ENCODE measurements at regions of chr11 and their contacts with region 1.

Region 1: DNA sequence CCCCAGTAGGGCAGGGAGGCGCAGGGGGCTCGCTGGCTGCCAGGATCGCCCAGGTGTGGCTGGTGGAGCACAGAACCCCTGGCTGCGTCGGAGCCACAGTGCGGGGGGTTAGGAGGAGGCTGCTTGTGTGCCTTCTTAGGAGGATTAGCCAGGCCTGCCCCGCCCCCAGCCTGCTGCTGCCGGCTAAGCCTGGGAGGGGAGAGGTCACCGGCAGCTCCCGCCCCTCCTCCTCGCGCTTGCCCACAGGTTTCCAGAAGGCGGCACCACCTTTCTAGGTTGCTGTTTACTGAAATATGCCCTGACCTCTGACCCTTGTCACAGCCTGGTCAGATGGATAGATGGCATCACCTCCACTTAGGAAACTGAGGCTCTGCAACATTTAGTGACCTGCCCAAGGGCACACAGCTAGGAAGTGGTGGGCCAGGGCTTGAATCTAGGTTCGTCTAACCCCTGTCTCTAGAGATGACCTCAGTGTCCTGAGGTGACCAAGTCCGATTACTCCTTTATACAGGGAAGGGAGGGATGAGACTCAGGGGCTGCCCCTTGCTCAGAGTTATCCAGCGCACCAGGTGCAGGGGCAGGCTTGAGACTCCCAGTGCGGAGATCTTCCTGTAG is 43.9 kb downstream of the MYO7A start:
- H3K4me3 Mint-ChIP-seq: no peak overlapping the region
- H3K27ac Mint-ChIP-seq: no peak overlapping the region
- H3K4me1 Mint-ChIP-seq: peaks cover 40% of the 10 kb centered on the region
- H3K27me3 Mint-ChIP-seq: peaks cover 10% of the 10 kb centered on the region

Region 2: GRCh38 chr11:76734456-76735420 is 437.3 kb before region 1 on chr11:
- intact Hi-C with region 1: no loop called
- H3K4me3 Mint-ChIP-seq: no peak overlapping the region
- H3K27ac Mint-ChIP-seq: no peak overlapping the region
- H3K4me1 Mint-ChIP-seq: peaks cover 25% of the 10 kb centered on the region
- H3K27me3 Mint-ChIP-seq: peaks cover 29% of the 10 kb centered on the region

Region 3: GRCh38 chr11:76978818-76979217 is 193.2 kb before region 1 on chr11:
- intact Hi-C with region 1: no loop called
- H3K4me3 Mint-ChIP-seq: no peak overlapping the region
- H3K27ac Mint-ChIP-seq: no peak overlapping the region
- H3K4me1 Mint-ChIP-seq: no peaks in the 10 kb centered on the region
- H3K27me3 Mint-ChIP-seq: no peaks in the 10 kb centered on the region

Region 4: GRCh38 chr11:77091146-77091940 is 80.6 kb before region 1 on chr11:
- intact Hi-C with region 1: no loop called
- H3K4me3 Mint-ChIP-seq: no peak overlapping the region
- H3K27ac Mint-ChIP-seq: no peak overlapping the region
- H3K4me1 Mint-ChIP-seq: no peaks in the 10 kb centered on the region
- H3K27me3 Mint-ChIP-seq: peaks cover 5% of the 10 kb centered on the region

Region 5: DNA sequence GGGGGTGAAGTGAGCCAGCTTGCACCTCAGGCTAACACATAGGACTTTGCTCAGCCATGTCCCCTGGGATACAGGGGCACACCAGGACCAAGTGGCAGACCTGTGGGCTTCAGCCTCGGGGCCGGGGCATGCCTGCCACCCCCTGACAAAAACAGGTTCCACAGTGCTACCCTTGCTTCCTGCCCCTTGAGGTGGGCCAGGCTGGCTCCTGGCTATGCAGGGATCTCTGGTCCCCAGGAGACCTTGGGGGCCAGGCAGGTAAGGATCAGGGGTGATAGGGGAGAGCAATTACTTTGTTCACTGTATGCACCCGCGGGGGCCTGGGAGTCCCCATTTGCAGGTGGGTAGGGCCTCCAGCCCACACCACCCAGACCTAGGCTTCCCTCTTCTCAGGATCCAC is 46.3 kb before region 1 on chr11:
- intact Hi-C with region 1: no loop called
- H3K4me3 Mint-ChIP-seq: no peak overlapping the region
- H3K27ac Mint-ChIP-seq: no peak overlapping the region
- H3K4me1 Mint-ChIP-seq: peaks cover 13% of the 10 kb centered on the region
- H3K27me3 Mint-ChIP-seq: peaks cover 21% of the 10 kb centered on the region

Region 6: DNA sequence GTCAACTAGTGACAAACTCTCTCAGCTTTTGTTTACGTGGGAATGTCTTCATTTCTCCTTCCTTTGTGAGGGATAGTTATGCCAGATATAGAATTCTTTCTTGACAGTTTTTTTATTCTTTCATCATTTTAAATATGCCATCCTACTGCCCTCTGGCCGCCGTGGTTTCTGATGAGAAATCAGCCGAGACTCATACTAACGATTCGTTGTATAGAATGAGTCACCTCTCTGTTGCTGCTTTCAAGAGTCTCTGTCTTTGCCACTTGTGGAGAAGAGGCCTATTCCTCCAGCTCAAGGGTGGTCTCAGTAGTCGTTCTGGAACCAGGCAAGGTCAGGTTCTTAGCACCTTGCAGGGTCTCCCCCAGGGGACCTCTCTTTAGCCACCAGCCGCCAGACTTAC is 35.9 kb before region 1 on chr11:
- intact Hi-C with region 1: loop called (anchors 1 kb)
- H3K4me3 Mint-ChIP-seq: no peak overlapping the region
- H3K27ac Mint-ChIP-seq: no peak overlapping the region
- H3K4me1 Mint-ChIP-seq: no peaks in the 10 kb centered on the region
- H3K27me3 Mint-ChIP-seq: peaks cover 50% of the 10 kb centered on the region